ENCODE measurements at regions of chr4 and their contacts with region 1.

Region 1: GRCh38 chr4:165537028-165537648 is 158.3 kb downstream of the CPE start:
- DNase-seq: peak; percentile 58
- H3K4me3 Mint-ChIP-seq: no peak overlapping the region
- H3K27ac Mint-ChIP-seq: no peak overlapping the region
- H3K4me1 Mint-ChIP-seq: no peaks in the 10 kb centered on the region
- H3K27me3 Mint-ChIP-seq: no peaks in the 10 kb centered on the region
- CTCF ChIP-seq: peak; percentile 63

Region 2: DNA sequence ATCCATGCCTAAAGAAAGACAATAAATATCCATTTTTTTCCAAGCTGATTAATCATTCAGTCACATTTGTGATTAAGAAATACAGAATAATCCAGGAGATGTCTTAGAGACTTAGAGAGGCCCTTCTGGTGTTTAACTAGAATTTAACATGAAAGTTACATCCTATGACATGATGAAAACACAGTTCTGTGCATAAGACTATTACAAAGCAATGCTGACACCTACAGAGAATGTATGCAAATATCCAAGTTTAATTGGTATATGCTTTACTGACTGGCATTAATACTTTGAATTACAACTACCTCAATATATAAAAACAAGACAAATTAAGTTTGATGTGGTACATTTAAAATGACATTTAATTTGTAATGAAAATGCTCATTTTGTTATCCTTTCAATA is 318.1 kb after region 1 on chr4:
- CTCF ChIA-PET with region 1: interaction called, 6 read pairs
- POLR2A ChIA-PET with region 1: no interaction called
- intact Hi-C with region 1: loop called (anchors 1 kb)
- DNase-seq: no peak
- H3K4me3 Mint-ChIP-seq: no peak overlapping the region
- H3K27ac Mint-ChIP-seq: no peak overlapping the region
- H3K4me1 Mint-ChIP-seq: no peaks in the 10 kb centered on the region
- H3K27me3 Mint-ChIP-seq: no peaks in the 10 kb centered on the region
- CTCF ChIP-seq: no peak

Region 3: DNA sequence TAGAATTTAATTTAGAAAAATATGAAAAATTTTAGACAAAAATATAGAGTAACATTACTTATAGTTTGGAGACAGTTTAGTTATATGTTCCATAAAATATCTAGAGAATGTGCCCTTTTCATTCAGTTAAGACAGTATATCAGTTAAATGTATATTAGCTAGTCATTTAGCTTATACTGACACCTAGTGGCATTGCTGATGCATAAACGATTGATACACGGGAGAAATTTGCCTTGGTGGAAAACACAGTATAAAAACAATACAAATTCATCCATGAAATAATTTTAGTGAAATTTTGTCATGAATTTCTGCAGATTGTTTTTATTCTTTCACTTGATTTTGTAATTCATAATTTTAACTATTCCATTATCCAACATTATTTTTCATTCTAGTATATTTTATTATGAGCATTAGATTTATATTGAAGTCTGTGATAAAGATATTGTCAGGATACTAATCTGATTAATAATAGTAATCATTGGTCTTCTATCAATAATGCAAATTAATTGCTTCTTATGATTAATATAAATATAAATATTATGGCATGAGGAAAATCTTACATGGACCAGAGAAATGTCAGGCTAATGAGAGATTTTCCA is 554.9 kb after region 1 on chr4:
- CTCF ChIA-PET with region 1: interaction called, 6 read pairs
- POLR2A ChIA-PET with region 1: interaction called, 4 read pairs
- intact Hi-C with region 1: loop called (anchors 1 kb)
- DNase-seq: peak; percentile 60
- H3K4me3 Mint-ChIP-seq: no peak overlapping the region
- H3K27ac Mint-ChIP-seq: no peak overlapping the region
- H3K4me1 Mint-ChIP-seq: no peaks in the 10 kb centered on the region
- H3K27me3 Mint-ChIP-seq: no peaks in the 10 kb centered on the region
- CTCF ChIP-seq: peak; percentile 63

Region 4: GRCh38 chr4:166252487-166253402 is 715.6 kb after region 1 on chr4:
- CTCF ChIA-PET with region 1: no interaction called
- POLR2A ChIA-PET with region 1: no interaction called
- intact Hi-C with region 1: loop called (anchors 10 kb)
- DNase-seq: peak; percentile 47
- H3K4me3 Mint-ChIP-seq: no peak overlapping the region
- H3K27ac Mint-ChIP-seq: no peak overlapping the region
- H3K4me1 Mint-ChIP-seq: no peaks in the 10 kb centered on the region
- H3K27me3 Mint-ChIP-seq: no peaks in the 10 kb centered on the region
- CTCF ChIP-seq: peak; percentile 45

Measured in MCF 10A (cell line).